GM18951 (cell line): ENCODE measurements at regions of chr5 and their contacts with region 1.

Region 1: DNA sequence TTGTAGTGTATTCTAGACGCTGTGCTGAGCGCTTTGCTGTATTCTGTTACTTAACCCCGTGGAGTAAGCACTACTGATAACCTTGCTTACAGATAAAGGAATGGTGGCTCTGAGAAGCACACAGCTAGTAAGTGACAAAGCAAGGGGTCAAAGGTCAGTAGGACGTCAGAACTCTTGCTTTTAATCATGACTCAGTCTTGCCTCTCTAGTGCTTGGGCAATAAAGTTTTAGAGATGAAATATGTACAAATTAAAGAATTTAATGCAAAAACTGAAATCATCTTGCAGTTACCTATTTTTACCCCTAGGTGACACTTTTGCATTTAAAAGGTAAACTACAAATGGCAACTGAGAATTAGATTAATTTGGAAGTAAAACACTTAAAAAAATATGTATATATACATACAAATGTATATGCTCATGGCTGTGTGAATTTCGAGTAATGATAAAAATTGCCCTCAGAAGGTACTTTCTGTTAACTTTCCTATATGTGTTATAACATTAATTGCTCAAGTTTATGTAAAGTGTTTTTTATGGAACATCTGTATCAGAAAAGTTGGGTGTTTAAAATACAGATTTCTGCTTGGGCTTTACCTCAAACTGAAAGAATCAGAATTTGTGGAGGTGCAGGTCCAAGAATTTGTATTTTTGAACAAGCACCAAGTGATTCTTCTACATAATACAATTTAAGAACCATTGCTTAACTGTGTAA is 175.1 kb upstream of the DAB2 start:
- POLR2A ChIP-seq: no peak

Region 2: GRCh38 chr5:39948867-39949468 is 349.1 kb after region 1 on chr5:
- in situ Hi-C with region 1: loop called (anchors 25 kb)
- POLR2A ChIP-seq: no peak

Region 3: DNA sequence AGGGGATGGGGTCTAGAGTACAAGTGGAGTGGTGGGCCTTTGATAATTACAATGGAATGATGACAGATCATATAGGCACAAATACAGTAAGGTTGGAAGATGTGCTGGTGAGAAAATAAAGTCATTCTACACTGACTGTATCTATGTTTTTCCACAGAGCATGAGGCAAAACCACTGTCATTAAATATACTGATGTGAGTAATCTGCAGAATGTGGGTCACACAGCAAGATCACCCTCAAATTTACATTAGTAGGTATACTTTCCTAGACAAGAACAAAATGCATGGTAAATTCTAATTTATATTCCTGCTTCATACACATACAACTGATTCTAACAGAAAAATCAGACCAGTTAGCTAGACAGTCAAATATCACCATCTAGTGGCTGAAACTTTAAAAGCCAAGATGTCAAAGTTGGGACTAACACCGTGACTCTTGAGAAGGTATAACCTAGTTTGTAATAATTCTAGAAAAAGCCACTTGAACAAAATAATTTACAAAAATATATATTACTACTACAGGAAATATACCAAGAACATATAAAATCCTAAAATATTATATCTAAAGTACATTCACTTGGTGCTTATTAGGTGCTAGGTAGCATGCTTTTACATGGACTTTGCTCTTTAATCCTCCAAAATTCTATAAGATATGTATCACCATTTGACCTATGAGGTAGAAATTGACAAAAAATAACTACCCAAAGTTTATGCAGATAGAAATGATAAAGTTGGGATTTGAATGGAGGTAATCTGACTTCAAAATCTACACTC is 1136.4 kb after region 1 on chr5:
- in situ Hi-C with region 1: loop called (anchors 25 kb)
- POLR2A ChIP-seq: no peak